HCT116 (cell line): ENCODE measurements at regions of chr1 and their contacts with region 1.

Region 1: DNA sequence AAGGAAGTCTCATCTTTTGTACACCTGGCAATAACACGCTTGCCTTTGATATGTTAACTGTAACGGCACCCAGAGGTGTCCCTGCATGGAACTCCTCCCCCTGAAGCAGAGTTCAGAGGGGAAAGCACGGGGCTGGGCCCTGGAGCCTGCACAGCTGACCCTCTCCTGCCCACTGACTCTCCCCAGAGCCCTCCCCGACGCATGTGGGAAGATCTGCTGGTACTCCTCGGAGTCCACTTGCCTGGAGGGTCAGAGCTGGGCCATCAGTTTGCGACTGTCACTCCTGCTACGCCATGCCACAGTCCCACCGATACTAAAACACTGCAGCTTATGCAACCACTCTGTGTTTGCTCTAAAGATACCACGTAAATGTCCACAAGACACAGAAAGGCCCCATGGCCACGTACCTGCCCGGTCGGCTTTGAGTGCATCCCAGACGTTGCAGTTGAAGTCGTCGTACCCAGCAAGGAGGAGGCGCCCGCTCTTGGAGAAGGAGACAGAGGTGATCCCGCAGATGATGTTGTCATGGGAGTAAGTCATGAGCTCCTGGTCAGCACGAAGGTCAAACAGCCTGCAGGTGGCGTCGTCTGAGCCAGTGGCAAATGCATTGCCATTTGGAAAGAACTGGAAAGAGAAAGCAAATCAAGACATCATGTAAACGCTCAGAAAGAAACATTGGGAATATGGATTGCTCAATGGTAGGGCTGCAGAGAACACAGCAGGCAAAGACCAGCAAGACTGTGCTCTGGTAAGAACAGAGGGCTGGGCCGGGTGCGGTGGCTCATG is 10.6 kb upstream of the NADK start:
- DNase-seq: no peak
- ATAC-seq: peak; percentile 70
- H3K4me3 ChIP-seq: no peak overlapping the region
- H3K27ac ChIP-seq: no peak overlapping the region
- H3K4me1 ChIP-seq: no peaks in the 10 kb centered on the region
- H3K27me3 ChIP-seq: no peaks in the 10 kb centered on the region
- CTCF ChIP-seq: peak; percentile 37 to 52 (median 52); a peak in 5 of 6 replicates
- POLR2A ChIP-seq: no peak
- RAD21 ChIP-seq: peak; percentile 46

Region 2: DNA sequence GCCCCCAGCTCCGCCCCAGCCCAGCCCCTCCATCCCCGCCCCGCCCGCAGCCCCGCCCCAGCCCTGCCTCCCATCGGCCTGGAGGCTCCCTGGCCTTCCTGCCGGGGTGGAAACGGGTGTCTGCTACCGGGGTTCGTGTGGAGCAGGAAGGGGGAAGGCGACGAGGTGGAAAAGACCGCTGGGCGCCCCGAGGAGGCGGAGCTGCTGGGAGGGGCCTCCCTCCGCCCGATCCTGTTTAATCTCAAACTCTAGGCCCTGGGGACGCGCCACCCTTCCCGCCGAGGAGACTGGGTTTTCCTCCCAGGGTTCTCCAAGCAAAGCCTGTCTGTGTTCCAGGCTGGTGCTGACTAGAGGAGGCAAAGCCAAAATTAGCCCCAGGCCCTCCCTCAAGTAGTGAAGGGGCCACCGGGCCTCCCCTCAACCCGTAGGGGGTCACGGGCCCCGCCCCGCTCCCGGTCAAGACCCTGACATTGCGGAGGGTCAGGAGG is 631.4 kb before region 1 on chr1:
- CTCF ChIA-PET with region 1: no interaction called
- POLR2A ChIA-PET with region 1: no interaction called
- RAD21 ChIA-PET with region 1: no interaction called
- intact Hi-C with region 1: no loop called
- DNase-seq: peak; percentile 71
- ATAC-seq: peak; percentile 82
- H3K4me3 ChIP-seq: peak overlapping the region; percentile 56 to 77
- H3K27ac ChIP-seq: peak overlapping the region; percentile 97
- H3K4me1 ChIP-seq: peaks cover 15 to 37% of the 10 kb centered on the region in 2 experiments
- H3K27me3 ChIP-seq: no peaks in the 10 kb centered on the region
- CTCF ChIP-seq: no peak
- POLR2A ChIP-seq: peak; percentile 24
- RAD21 ChIP-seq: no peak

Region 3: GRCh38 chr1:1777950-1778662 is 10.7 kb before region 1 on chr1 and contains the start of gene NADK:
- CTCF ChIA-PET with region 1: interaction called, 11 read pairs
- POLR2A ChIA-PET with region 1: no interaction called
- RAD21 ChIA-PET with region 1: no interaction called
- intact Hi-C with region 1: no loop called
- DNase-seq: peak; percentile 16
- ATAC-seq: peak; percentile 67
- H3K4me3 ChIP-seq: peak within 1 kb of the TSS; percentile 71 to 91
- H3K27ac ChIP-seq: peak within 1 kb of the TSS; percentile 99
- H3K4me1 ChIP-seq: peaks cover 19 to 47% of the 10 kb centered on the region in 2 experiments; a peak in 3 of 4 replicates
- H3K27me3 ChIP-seq: no peaks in the 10 kb centered on the region
- CTCF ChIP-seq: no peak
- POLR2A ChIP-seq: peak; percentile 87
- RAD21 ChIP-seq: 0 out of 2 replicates have a peak, but pooled peaks have one; percentile 29
- total RNA-seq, gene NADK: 93.4 TPM

Region 4: GRCh38 chr1:1906185-1907097 is 117.6 kb after region 1 on chr1:
- CTCF ChIA-PET with region 1: interaction called, 12 read pairs
- POLR2A ChIA-PET with region 1: no interaction called
- RAD21 ChIA-PET with region 1: interaction called in 1 of 2 experiments, 4 read pairs
- intact Hi-C with region 1: loop called (anchors 1 kb)
- DNase-seq: peak; percentile 71
- ATAC-seq: peak; percentile 70
- H3K4me3 ChIP-seq: no peak overlapping the region
- H3K27ac ChIP-seq: peak overlapping the region; percentile 87
- H3K4me1 ChIP-seq: peaks cover 19 to 36% of the 10 kb centered on the region in 2 experiments
- H3K27me3 ChIP-seq: no peaks in the 10 kb centered on the region
- CTCF ChIP-seq: peak; percentile 93 to 96 (median 94)
- POLR2A ChIP-seq: no peak
- RAD21 ChIP-seq: peak; percentile 100